MCF 10A (cell line): ENCODE measurements at regions of chr3 and their contacts with region 1.

Region 1: GRCh38 chr3:150495563-150496168 is 50.6 kb downstream of the SERP1 start:
- DNase-seq: peak; percentile 71
- H3K4me3 Mint-ChIP-seq: no peak overlapping the region
- H3K27ac Mint-ChIP-seq: no peak overlapping the region
- H3K4me1 Mint-ChIP-seq: peaks cover 17% of the 10 kb centered on the region
- H3K27me3 Mint-ChIP-seq: no peaks in the 10 kb centered on the region
- CTCF ChIP-seq: peak; percentile 64

Region 2: GRCh38 chr3:150227839-150228238 is 267.8 kb before region 1 on chr3:
- CTCF ChIA-PET with region 1: interaction called, 4 read pairs
- POLR2A ChIA-PET with region 1: no interaction called
- intact Hi-C with region 1: loop called (anchors 1 kb)
- DNase-seq: peak; percentile 74
- H3K4me3 Mint-ChIP-seq: no peak overlapping the region
- H3K27ac Mint-ChIP-seq: no peak overlapping the region
- H3K4me1 Mint-ChIP-seq: peaks cover under 1% of the 10 kb centered on the region
- H3K27me3 Mint-ChIP-seq: no peaks in the 10 kb centered on the region
- CTCF ChIP-seq: peak; percentile 67

Region 3: DNA sequence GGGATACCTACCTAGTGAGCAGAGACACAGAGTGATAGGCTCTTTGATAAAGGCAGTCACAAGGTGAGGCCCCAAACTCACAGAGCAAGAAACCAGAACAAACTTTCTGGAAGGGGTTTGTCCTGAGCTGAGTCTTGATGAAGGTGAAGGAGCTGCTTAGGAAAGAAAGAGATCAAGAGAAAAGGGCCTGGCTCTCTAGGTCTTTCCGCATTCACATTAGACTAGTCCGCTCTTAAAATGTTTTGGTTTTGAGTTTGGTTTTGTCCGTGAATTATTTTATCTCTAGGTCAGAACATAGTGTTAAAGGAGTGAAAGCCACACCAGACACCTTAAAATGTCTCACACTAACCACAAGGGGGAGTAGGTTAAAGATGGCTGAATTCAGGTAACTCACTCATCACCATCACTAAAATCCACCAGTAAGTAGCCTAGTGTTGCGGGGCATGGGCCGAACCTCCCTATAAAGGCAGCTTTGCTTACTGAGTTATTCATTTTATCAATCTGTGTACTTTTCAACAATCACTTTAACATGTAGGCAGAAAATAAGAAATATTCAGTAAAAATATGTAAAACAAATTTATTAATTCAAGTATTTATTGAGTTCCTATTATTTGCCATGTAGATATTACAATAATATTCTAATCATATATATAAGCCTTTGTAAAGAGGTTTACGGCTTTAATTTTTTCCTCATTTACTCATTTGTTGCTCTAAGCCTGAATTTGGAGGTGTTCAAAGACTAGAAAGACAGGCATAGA is 209.1 kb before region 1 on chr3:
- CTCF ChIA-PET with region 1: interaction called, 20 read pairs
- POLR2A ChIA-PET with region 1: interaction called, 3 read pairs
- intact Hi-C with region 1: loop called (anchors 1 kb)
- DNase-seq: peak; percentile 72
- H3K4me3 Mint-ChIP-seq: no peak overlapping the region
- H3K27ac Mint-ChIP-seq: peak overlapping the region; percentile 64
- H3K4me1 Mint-ChIP-seq: peaks cover 9% of the 10 kb centered on the region
- H3K27me3 Mint-ChIP-seq: no peaks in the 10 kb centered on the region
- CTCF ChIP-seq: peak; percentile 58

Region 4: DNA sequence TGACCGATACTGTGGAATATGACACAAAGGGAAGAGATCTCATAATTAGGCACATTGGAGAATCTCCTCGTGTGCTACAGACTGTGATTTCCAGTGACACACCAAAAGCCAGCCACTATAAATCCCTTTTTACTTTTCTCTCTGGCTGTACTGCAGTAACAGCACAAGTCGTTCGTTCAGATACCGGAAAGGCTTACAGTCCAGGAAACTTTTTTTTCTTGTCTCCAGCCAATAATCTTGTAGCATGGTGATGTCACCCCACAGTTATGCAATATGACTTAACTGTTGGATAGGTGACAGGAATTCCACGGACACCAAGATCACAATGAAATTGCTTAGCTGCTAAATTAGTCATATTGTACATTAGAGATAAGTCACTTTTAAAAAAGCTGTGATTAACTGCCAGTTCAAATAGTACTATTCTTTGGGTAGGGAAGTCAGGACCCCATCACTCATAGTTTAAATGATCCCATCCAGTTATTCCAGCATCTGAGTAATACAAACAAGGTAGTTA is 123.9 kb before region 1 on chr3:
- CTCF ChIA-PET with region 1: no interaction called
- POLR2A ChIA-PET with region 1: no interaction called
- intact Hi-C with region 1: loop called (anchors 2 kb)
- DNase-seq: peak; percentile 96
- H3K4me3 Mint-ChIP-seq: peak overlapping the region; percentile 74
- H3K27ac Mint-ChIP-seq: peak overlapping the region; percentile 79
- H3K4me1 Mint-ChIP-seq: peaks cover 44% of the 10 kb centered on the region
- H3K27me3 Mint-ChIP-seq: no peaks in the 10 kb centered on the region
- CTCF ChIP-seq: no peak

Region 5: DNA sequence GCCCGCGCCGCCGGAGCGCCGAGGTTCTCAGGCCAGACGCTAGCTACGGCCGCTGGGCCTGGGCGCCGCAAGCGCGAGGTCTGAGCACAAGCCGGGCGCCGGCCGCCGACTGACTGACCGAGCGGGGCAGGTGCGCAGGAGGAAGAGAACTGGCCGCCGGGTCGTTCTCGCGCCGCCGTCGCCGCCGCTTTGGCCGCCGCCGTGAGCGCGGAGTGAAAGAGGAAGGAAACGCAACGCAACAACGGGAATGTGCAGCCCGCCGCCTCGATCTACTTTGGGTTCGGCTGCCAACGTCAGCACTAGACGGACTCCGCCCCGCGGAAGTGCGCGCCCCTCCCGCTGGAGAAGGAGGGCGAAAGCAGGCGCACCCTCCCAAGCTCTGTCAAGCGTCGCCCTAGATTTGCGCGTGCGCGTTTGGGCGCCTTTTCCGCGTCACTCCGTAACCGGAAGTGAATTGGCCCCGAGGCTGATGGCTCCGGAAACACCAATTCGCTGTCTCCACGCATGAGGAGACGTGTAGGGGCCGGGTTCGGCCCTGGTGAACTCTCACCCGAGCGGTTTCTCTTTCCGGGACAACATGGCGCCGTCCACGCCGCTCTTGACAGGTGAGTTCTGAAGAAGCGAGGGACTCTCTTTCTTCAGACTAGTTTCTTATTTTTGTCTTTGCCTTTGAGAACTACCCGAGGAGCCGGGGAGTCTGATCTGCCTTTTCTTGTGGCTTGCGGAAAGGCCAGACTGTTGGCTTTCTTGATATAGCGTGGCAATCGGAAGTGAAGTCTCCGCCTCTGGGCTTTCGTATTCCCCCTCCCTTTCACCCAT is 50.8 kb after region 1 on chr3 and contains the starts of genes EIF2A and SERP1:
- CTCF ChIA-PET with region 1: interaction called, 4 read pairs
- POLR2A ChIA-PET with region 1: interaction called, 22 read pairs
- intact Hi-C with region 1: no loop called
- DNase-seq: peak; percentile 99
- H3K4me3 Mint-ChIP-seq: peak within 1 kb of the TSS; percentile 83
- H3K27ac Mint-ChIP-seq: peak within 1 kb of the TSS; percentile 99
- H3K4me1 Mint-ChIP-seq: peaks cover 17% of the 10 kb centered on the region
- H3K27me3 Mint-ChIP-seq: no peaks in the 10 kb centered on the region
- CTCF ChIP-seq: no peak
- total RNA-seq, gene EIF2A: 112 and 117 TPM in 2 replicates
- total RNA-seq, gene SERP1: 227 and 308 TPM in 2 replicates